Psoas muscle (tissue), 8 donors: ENCODE measurements at regions of chr16 and their contacts with region 1.

Region 1: DNA sequence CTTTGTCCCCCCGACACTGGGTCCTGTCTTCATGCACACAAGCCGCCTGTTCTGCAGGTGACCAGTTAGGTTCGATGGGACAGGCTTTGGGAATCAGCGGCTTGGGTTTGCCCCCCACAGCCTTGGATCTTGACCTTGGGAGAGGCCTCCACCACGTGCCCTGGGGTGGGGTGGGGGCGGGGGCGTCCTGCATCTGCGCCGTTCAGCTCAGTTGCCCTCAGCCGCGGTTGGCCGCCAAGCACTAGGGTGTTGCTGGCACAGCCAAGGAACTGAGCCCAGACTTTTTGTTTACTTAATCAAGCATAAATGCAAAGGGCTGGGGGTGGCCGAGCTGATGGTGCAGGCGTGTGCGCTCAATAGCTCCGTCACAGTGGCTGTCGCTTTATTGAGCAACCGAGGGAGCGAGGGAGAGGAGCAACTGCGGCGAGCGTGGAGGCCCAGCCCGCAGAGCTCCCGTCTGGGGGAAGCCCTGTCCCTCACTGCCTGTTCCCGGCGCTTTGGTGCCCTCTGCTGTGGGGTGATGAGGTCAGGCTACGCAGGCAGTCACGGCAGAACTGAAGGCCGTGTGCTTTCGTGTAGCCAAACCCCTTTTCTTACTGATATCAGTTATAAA is 33.9 kb downstream of the JPH3 start:
- DNase-seq: peak; percentile 85 to 92
- ATAC-seq: peak; percentile 89 to 98 (median 96)
- H3K4me3 ChIP-seq: peak overlapping the region; percentile 37
- H3K27ac ChIP-seq: no peak overlapping the region
- H3K4me1 ChIP-seq: peaks cover 11% of the 10 kb centered on the region
- H3K27me3 ChIP-seq: peaks cover 0 to 50% (median 4%) of the 10 kb centered on the region in 3 donors
- CTCF ChIP-seq: peak; percentile 65

Region 2: DNA sequence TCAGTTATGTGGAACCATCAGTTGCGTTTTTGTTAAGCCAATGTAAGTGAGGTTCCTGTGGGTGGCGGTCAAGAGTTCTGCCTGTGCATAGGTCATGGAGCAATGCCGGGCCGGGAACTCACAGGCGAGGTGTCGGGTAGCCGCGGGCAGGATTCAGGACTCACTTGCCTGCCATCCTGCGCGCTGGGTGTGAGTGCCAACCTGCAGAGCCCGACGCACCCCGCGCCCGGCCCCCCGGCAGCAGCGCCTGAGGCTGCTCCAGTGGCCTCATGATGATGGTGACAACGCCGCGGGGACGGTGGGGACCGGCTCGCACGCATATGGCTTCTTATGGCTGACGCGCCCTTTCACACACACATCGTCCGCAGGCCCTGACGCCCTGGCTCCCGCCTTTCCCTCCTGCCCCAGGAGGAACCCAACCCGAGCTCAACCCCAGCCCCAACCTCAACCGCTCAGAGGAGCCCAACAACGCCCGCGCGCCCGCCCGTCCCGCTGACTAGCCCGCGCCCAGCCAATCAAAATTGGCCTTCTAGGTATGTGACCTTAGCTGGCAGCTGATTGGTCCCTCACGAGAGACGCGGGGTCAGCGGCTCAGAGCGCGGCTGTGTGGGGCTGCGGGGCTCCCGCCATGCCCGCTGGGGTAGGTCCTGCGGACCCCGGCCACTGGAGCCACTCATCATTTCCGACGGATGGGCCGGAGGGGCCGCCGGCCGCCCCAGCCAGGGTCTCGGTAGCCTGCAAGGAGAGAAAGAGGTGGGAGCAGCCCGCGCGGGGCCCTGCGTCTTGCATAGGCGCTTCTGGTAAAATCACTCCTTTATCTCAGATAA is 319.0 kb before region 1 on chr16 and contains the start of gene C16orf95:
- intact Hi-C with region 1: loop called in 1 of 2 experiments (anchors 5 kb)
- DNase-seq: peak; percentile 95 to 98
- ATAC-seq: peak; percentile 96 to 97 (median 96)
- H3K4me3 ChIP-seq: peak within 1 kb of the TSS; percentile 100
- H3K27ac ChIP-seq: peak within 1 kb of the TSS; percentile 96
- H3K4me1 ChIP-seq: peaks cover 16% of the 10 kb centered on the region
- H3K27me3 ChIP-seq: no peaks in the 10 kb centered on the region
- CTCF ChIP-seq: peak; percentile 66
- total RNA-seq, gene C16orf95: 5.3 to 8.1 (median 6.0) TPM

Region 3: DNA sequence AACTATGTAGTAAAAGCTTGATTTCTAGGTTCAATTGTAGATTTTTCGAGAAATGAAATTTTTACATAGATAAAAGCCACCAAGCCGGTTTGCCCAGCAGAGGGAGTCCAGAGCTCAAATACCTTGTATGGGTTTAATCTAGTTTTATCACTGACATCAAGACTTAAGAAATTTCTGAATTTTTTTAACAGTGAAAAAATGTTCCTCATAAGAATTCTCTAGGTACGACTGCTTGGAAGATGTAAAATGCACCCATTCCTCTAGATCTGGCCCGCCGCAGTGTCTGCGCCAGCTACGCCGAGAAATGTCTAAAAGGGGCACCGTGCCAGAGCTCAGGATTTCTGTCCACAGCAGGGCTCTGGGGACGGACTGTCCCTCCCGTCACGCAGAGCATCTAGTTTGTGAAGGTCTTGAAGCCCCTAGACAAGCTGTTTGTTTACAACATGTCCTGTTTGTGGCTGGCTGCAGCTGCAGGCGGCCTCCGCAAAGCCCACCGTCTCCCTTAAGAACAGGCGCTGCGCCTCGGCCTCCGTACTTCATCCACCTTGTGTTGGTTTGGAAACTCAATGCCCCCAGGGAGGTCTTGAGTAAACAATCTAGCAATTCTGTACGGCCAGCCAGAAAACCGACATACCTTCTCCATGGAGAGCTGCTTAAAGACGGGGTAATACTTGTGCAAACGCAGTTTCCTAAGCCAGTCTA is 219.2 kb before region 1 on chr16:
- intact Hi-C with region 1: loop called (anchors 2 to 5 kb)
- DNase-seq: no peak
- ATAC-seq: peak in 1 of 4 donors; percentile 53
- H3K4me3 ChIP-seq: no peak overlapping the region
- H3K27ac ChIP-seq: no peak overlapping the region
- H3K4me1 ChIP-seq: no peaks in the 10 kb centered on the region
- H3K27me3 ChIP-seq: no peaks in the 10 kb centered on the region
- CTCF ChIP-seq: peak; percentile 69

Region 4: DNA sequence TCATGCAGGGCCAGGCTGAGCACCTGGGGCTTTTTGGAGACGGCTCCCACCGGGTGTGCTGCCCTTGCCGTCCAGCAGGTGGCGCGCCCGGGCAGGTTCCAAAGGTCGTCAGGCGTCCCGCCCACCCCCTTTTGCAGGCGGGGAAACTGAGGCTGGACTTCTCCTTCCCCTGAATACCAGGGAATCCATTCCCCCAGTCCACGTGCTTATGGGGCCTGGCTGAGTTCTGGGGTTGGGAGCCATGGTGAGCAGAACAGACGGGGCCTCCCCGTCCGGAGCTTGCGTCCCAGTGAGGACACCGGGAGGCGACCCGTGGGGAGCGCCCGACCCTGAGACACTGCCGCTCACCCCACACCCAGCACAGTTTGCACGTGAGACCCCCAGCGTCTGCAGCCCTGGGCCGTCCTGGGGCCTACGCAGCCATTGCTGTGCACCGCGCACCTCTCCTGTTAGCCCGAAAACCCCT is 85.6 kb before region 1 on chr16:
- intact Hi-C with region 1: loop called in 1 of 2 experiments (anchors 5 kb)
- DNase-seq: peak; percentile 49 to 70
- ATAC-seq: peak; percentile 47 to 66 (median 53)
- H3K4me3 ChIP-seq: no peak overlapping the region
- H3K27ac ChIP-seq: no peak overlapping the region
- H3K4me1 ChIP-seq: no peaks in the 10 kb centered on the region
- H3K27me3 ChIP-seq: peaks cover 0 to 34% (median 9%) of the 10 kb centered on the region in 3 donors
- CTCF ChIP-seq: peak; percentile 84

Region 5: DNA sequence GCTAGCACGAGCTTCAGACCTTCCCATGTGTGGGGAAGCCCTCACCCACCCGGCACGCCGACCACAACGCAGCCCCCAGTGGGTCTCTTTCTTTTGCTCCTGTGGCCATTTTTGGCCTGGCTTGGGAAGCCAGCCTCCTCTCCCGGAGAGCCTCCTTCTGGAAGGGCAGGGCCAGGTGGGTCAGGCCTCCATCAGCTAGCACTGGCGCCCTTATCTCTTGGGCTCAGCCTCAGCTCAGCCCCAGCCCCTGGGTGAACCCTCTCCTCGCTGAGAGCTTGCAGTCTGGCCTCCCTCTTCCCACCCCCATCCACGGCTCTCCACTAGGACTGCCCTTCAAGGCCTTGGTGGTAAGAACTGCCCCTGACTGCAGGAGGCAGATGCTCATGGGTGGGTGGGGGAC is 48.5 kb before region 1 on chr16:
- intact Hi-C with region 1: loop called (anchors 2 kb)
- DNase-seq: no peak
- ATAC-seq: no peak
- H3K4me3 ChIP-seq: no peak overlapping the region
- H3K27ac ChIP-seq: no peak overlapping the region
- H3K4me1 ChIP-seq: peaks cover 5% of the 10 kb centered on the region
- H3K27me3 ChIP-seq: peaks cover 0 to 40% (median 2%) of the 10 kb centered on the region in 3 donors
- CTCF ChIP-seq: no peak

Region 6: DNA sequence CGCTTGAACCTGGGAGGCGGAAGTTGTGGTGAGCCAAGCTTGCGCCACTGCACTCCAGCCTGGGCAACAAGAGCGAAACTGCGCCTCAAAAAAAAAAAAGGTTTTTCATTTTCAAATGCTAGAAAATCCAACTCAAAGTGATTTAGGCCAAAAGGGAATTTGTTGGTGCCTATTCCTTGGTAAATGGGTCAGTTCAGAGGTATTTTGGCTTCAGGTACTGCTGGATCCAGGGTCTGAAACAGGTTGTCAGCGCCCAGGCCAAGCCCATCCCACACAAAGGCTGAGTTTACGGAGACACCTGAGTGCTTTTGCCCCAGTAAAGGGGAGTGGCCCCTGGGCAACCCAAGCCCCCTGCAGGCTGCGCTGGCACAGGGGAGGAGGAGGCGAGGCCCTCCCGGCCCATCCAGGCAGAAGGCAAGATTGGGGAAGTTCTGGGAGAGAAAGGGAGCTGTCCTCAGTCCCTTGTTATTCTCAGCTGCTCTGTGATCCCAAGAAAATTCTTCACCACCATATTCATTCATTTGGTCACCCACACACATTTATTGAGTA is 42.4 kb before region 1 on chr16:
- intact Hi-C with region 1: loop called (anchors 2 kb)
- DNase-seq: no peak
- ATAC-seq: no peak
- H3K4me3 ChIP-seq: no peak overlapping the region
- H3K27ac ChIP-seq: no peak overlapping the region
- H3K4me1 ChIP-seq: peaks cover 5% of the 10 kb centered on the region
- H3K27me3 ChIP-seq: peaks cover 0 to 39% (median 3%) of the 10 kb centered on the region in 3 donors
- CTCF ChIP-seq: no peak